Caco-2 (cell line): ENCODE measurements at regions of chr11 and their contacts with region 1.

Region 1: DNA sequence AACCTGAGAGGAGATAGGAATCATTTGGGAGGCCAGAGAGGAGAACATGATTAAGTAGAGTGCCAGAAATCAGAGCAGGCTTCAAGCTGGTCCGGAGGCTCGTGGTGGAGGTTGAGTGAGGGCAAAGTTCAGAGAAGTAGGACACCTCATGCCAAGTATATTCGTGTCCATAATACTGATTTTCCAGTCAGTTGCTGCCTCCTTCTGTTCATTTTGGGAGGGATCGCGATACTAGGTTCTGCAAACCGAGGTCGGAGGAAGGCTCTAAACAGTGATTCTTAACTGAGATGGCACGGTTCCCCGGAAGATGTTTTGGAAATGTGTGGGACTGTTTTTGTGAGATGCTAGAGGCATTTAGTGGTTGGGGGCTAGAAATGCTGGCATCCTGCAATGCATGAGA is 13.6 kb upstream of the CD3E start:
- DNase-seq: peak; percentile 80 to 82
- H3K4me3 ChIP-seq: no peak overlapping the region
- H3K4me3 Mint-ChIP-seq: no peak overlapping the region
- H3K27ac Mint-ChIP-seq: no peak overlapping the region
- H3K4me1 ChIP-seq: peaks cover 9% of the 10 kb centered on the region
- H3K4me1 Mint-ChIP-seq: peaks cover 24% of the 10 kb centered on the region
- H3K27me3 ChIP-seq: no peaks in the 10 kb centered on the region
- H3K27me3 Mint-ChIP-seq: no peaks in the 10 kb centered on the region
- CTCF ChIP-seq: peak; percentile 61 to 70

Region 2: GRCh38 chr11:118258410-118258809 is 32.5 kb before region 1 on chr11:
- CTCF ChIA-PET with region 1: interaction called, 11 read pairs
- POLR2A ChIA-PET with region 1: no interaction called
- intact Hi-C with region 1: loop called (anchors 1 kb)
- DNase-seq: peak in 1 of 2 experiments; percentile 50
- H3K4me3 ChIP-seq: no peak overlapping the region
- H3K4me3 Mint-ChIP-seq: no peak overlapping the region
- H3K27ac Mint-ChIP-seq: no peak overlapping the region
- H3K4me1 ChIP-seq: peaks cover 5% of the 10 kb centered on the region; the same call in 1 of the 2 replicates
- H3K4me1 Mint-ChIP-seq: peaks cover 5% of the 10 kb centered on the region
- H3K27me3 ChIP-seq: no peaks in the 10 kb centered on the region
- H3K27me3 Mint-ChIP-seq: no peaks in the 10 kb centered on the region
- CTCF ChIP-seq: peak; percentile 54 to 62